ENCODE measurements at regions of chr3 and their contacts with region 1.

Region 1: GRCh38 chr3:113745273-113746068 is 578 bp downstream of the NAA50 start:
- DNase-seq: peak; percentile 56 to 78
- H3K4me3 ChIP-seq: peak overlapping the region; percentile 76 to 96 (median 94)
- H3K27ac ChIP-seq: peak overlapping the region; percentile 97 to 99
- H3K4me1 ChIP-seq: peaks cover 0 to 17% of the 10 kb centered on the region in 2 donors
- H3K27me3 ChIP-seq: no peaks in the 10 kb centered on the region
- CTCF ChIP-seq: peak; percentile 26 to 68 (median 57)
- POLR2A ChIP-seq: no peak

Region 2: GRCh38 chr3:112568642-112569041 is 1176.8 kb before region 1 on chr3:
- intact Hi-C with region 1: loop called (anchors 5 kb)
- DNase-seq: no peak
- H3K4me3 ChIP-seq: no peak overlapping the region
- H3K27ac ChIP-seq: no peak overlapping the region
- H3K4me1 ChIP-seq: no peaks in the 10 kb centered on the region
- H3K27me3 ChIP-seq: no peaks in the 10 kb centered on the region
- CTCF ChIP-seq: no peak
- POLR2A ChIP-seq: no peak

Region 3: GRCh38 chr3:113802795-113803455 is 57.5 kb after region 1 on chr3:
- intact Hi-C with region 1: no loop called
- DNase-seq: no peak
- H3K4me3 ChIP-seq: no peak overlapping the region
- H3K27ac ChIP-seq: no peak overlapping the region
- H3K4me1 ChIP-seq: no peaks in the 10 kb centered on the region
- H3K27me3 ChIP-seq: no peaks in the 10 kb centered on the region
- CTCF ChIP-seq: no peak
- POLR2A ChIP-seq: no peak